ENCODE measurements at regions of chr3 and their contacts with region 1.

Region 1: DNA sequence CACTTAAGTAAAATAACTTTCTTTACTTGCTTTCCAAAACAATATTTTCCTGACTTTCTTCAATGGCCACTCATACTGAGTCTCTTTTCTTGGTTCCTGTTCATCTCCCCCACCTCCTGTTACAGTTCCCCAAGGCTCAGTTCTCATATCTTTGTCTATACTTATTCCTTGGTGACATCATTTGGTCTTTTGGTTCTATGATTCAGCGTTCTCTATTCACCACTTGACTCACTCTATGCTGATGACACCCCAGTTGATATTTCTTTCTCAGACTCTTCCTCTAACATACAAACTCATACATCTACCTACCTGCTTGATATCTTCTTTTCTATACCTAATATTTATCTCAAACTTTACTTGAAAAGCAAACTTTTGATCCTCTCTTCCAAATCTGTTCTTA is 85.0 kb upstream of the P3H2 start:
- DNase-seq: no peak
- H3K4me3 ChIP-seq: no peak overlapping the region
- H3K27ac ChIP-seq: no peak overlapping the region
- H3K4me1 ChIP-seq: peaks cover 4% of the 10 kb centered on the region
- H3K27me3 ChIP-seq: peaks cover 10% of the 10 kb centered on the region
- CTCF ChIP-seq: no peak

Region 2: DNA sequence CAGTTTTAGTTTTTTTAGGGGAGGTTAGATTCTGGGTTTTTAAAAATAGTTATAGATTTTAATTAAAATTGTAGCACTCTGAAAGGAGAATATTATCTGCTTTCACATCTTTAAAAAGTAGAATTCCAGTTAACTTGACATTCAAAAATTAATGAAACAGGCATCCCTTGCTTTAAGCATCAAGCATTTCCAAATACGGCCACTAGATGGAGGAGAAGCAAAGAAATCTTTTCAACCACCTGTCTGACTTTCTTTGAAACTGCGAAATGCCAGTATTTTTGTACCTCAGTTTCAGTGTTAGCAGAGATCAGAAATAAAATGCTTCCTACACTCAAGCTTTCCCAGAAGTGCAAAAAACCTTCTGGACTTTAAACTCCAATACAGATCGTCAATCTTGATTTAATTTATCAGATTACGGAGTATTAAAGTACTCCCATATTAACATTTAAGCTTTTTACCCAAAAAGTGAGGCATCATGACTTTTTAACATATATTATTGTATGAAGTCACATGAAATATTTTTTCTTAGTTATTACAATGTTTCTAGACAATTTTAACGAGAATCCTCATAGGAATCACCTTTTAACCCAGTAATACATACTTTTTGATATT is 238.4 kb before region 1 on chr3:
- intact Hi-C with region 1: loop called (anchors 2 kb)
- DNase-seq: no peak
- H3K4me3 ChIP-seq: no peak overlapping the region
- H3K27ac ChIP-seq: no peak overlapping the region
- H3K4me1 ChIP-seq: no peaks in the 10 kb centered on the region
- H3K27me3 ChIP-seq: no peaks in the 10 kb centered on the region
- CTCF ChIP-seq: peak; percentile 91

Region 3: GRCh38 chr3:190092250-190092649 is 113.5 kb before region 1 on chr3:
- intact Hi-C with region 1: no loop called
- DNase-seq: no peak
- H3K4me3 ChIP-seq: no peak overlapping the region
- H3K27ac ChIP-seq: peak overlapping the region; percentile 41
- H3K4me1 ChIP-seq: peaks cover 24% of the 10 kb centered on the region
- H3K27me3 ChIP-seq: peaks cover 6% of the 10 kb centered on the region
- CTCF ChIP-seq: no peak